MCF 10A (cell line): ENCODE measurements at regions of chr3 and their contacts with region 1.

Region 1: DNA sequence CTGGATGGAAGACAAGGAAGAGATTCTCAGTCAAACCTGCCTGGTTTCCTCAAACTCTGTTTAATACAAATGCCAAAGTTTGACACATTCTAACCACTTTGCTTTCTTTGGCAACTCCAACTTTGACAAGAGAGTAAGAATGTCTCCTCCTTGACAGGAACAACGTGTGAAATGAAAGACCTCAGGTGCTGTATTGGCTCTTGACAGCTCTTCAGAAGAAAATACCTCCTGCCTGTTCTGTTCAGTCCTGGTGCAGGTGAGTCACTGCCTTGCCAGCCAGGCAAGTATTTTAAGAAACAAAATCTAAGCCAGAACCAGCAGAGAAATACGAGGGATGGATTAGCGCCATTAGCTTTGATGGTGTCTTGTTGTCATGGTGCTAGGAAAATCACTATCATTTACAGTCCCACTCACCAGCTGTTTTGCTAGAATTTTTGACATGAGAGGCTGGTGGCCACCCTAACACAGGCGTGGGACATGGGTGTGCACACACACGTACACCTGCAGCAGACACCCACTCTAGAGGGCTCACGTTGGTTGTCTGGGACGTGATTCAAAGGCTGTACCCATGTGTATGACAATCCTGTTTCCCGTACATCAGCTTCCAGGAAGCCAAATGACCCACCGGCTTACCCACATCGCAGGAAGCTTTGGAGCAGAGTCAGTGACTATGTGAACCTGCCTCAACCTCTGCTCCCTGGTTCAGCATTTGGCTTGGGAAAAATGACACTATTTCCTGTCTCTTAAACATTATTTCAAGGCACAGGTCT is 60.4 kb downstream of the CCNL1 start:
- DNase-seq: peak; percentile 71
- H3K4me3 Mint-ChIP-seq: no peak overlapping the region
- H3K27ac Mint-ChIP-seq: peak overlapping the region; percentile 78
- H3K4me1 Mint-ChIP-seq: peaks cover 22% of the 10 kb centered on the region
- H3K27me3 Mint-ChIP-seq: no peaks in the 10 kb centered on the region
- CTCF ChIP-seq: no peak

Region 2: GRCh38 chr3:157115069-157116006 is 15.8 kb after region 1 on chr3:
- CTCF ChIA-PET with region 1: interaction called, 4 read pairs
- POLR2A ChIA-PET with region 1: interaction called, 331 read pairs
- intact Hi-C with region 1: no loop called
- DNase-seq: no peak
- H3K4me3 Mint-ChIP-seq: no peak overlapping the region
- H3K27ac Mint-ChIP-seq: no peak overlapping the region
- H3K4me1 Mint-ChIP-seq: peaks cover 5% of the 10 kb centered on the region
- H3K27me3 Mint-ChIP-seq: no peaks in the 10 kb centered on the region
- CTCF ChIP-seq: no peak

Region 3: DNA sequence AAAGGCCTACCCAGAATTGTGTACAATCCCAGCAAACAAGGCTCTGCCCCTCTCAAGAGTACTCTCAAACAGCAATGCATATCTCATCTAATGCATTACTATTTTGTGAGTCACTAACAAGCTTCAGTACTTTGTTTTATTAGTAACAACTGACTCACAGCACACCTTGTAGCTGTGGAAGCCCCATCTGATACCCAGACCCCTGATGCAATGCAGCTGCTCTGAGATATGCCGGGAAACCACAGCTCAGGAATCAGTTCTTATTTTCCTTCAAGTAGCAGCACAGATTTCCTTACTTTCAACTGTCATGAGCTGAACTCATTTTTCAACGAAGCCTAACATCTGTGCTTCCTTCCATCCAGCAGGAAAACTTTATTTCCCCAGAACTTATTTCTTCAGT is 22.6 kb after region 1 on chr3:
- CTCF ChIA-PET with region 1: interaction called, 8 read pairs
- POLR2A ChIA-PET with region 1: interaction called, 331 read pairs
- intact Hi-C with region 1: no loop called
- DNase-seq: peak; percentile 80
- H3K4me3 Mint-ChIP-seq: no peak overlapping the region
- H3K27ac Mint-ChIP-seq: peak overlapping the region; percentile 82
- H3K4me1 Mint-ChIP-seq: peaks cover 31% of the 10 kb centered on the region
- H3K27me3 Mint-ChIP-seq: no peaks in the 10 kb centered on the region
- CTCF ChIP-seq: no peak